GM13977 (cell line): ENCODE measurements at regions of chr5 and their contacts with region 1.

Region 1: DNA sequence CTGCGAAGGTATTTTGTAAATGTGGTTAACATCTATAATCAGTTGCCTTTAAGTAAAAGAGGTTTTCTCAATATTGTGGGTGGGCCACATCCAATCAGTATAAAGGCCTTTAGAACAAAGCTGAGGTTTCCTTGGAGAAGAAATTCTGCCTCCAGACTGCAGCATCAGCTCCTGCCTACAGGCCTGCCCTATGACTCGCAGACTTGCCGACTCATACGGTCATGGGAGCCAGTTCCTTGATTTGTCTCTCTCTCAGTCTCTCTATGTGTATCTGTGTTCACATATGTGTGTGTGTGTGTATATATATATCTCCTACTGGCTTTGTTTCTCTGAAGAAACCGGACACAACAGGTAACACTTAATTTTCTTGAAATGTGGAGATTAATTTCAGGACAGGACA is 45.3 kb downstream of the SLC36A1 start:
- DNase-seq: no peak
- CTCF ChIP-seq: no peak

Region 2: GRCh38 chr5:151447174-151448037 is 45.3 kb before region 1 on chr5 and contains the start of gene SLC36A1:
- in situ Hi-C with region 1: loop called (anchors 10 kb)
- DNase-seq: peak; percentile 90
- CTCF ChIP-seq: peak; percentile 94

Region 3: GRCh38 chr5:151592855-151593408 is 100.2 kb after region 1 on chr5:
- in situ Hi-C with region 1: no loop called
- DNase-seq: no peak
- CTCF ChIP-seq: no peak